Activated T-helper 2 cell treated with anti-CD3 and anti-CD28 coated beads, Interferon-gamma antibody, Interleukin-2, Interleukin-4, amounts not matched to agents 10 μg/mL and 5 μg/mL and 100 μg/mL, durations not matched to agents 14 hours and 24 hours and 36 hours (primary cell): ENCODE measurements at regions of chr17 and their contacts with region 1.

Region 1: GRCh38 chr17:31313982-31314784 is at the start of gene EVI2B:
- DNase-seq: no peak
- H3K4me3 Mint-ChIP-seq: peak within 1 kb of the TSS; percentile 88
- H3K27ac Mint-ChIP-seq: peak within 1 kb of the TSS; percentile 96
- H3K4me1 Mint-ChIP-seq: peaks cover 51% of the 10 kb centered on the region
- H3K27me3 Mint-ChIP-seq: no peaks in the 10 kb centered on the region
- total RNA-seq, gene EVI2B: 13.0 and 13.9 TPM in 2 replicates

Region 2: DNA sequence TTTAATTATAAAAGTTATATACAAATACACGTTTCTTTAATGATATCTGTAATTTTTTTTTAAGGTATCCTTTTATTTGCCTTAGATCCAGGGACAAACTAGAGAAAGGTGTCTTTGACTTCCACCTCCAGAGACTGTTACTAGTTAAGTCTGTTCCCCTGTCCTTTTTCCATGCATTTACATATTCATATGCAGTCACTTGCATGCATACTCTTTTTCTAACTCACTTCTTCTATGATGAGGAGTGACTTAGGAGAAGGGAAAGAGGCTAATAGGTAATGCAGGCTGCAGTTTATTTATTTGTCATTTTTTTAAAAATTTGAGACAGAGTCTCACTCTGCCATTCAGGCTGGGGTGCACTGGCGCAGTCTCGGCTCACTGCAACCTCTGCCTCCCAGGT is 78.0 kb before region 1 on chr17:
- intact Hi-C with region 1: no loop called
- DNase-seq: no peak
- H3K4me3 Mint-ChIP-seq: no peak overlapping the region
- H3K27ac Mint-ChIP-seq: no peak overlapping the region
- H3K4me1 Mint-ChIP-seq: no peaks in the 10 kb centered on the region
- H3K27me3 Mint-ChIP-seq: no peaks in the 10 kb centered on the region

Region 3: DNA sequence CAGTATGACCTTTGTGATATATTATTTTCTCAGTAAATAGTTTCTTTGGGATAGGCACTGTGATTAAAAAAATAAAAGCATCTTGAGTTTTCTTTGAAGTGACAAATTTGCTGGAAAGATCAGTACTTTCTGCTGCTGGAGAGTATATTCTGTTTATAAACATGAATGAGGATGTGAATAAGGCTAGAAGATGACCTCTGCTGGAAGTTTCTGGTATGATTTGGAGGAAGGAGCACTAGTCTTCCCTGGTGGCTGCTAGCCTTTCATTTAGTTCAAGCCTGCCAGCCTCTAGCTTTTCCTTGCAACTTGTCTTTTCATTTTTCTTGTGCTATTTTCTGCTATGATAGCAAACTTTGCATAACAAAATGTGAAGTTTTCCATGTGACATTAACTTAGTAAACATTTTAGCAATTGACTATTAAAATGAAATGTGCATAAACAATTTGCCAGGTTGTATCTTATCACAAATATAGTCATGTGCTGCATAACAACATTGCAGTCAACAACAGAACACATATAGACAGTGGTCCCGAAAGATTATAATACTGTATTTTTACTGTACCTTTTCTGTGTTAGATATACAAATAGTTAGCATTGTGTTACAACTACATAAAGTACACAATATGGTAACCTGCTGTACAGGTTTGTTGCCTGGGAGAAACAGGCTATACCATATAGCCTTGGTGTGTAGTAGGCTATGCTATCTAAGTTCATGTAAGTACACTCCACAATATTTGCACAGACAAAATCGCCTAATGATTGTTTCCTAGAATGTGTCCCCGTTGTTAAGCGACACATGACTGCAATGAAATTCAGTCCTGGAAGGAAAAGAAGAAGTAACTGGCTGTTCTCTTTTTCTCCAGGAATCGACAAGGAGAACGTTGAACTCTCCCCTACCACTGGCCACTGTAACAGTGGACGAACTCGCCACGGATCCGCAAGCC is 59.2 kb after region 1 on chr17:
- intact Hi-C with region 1: loop called (anchors 5 kb)
- DNase-seq: no peak
- H3K4me3 Mint-ChIP-seq: no peak overlapping the region
- H3K27ac Mint-ChIP-seq: no peak overlapping the region
- H3K4me1 Mint-ChIP-seq: peaks cover 15% of the 10 kb centered on the region
- H3K27me3 Mint-ChIP-seq: no peaks in the 10 kb centered on the region

Region 4: DNA sequence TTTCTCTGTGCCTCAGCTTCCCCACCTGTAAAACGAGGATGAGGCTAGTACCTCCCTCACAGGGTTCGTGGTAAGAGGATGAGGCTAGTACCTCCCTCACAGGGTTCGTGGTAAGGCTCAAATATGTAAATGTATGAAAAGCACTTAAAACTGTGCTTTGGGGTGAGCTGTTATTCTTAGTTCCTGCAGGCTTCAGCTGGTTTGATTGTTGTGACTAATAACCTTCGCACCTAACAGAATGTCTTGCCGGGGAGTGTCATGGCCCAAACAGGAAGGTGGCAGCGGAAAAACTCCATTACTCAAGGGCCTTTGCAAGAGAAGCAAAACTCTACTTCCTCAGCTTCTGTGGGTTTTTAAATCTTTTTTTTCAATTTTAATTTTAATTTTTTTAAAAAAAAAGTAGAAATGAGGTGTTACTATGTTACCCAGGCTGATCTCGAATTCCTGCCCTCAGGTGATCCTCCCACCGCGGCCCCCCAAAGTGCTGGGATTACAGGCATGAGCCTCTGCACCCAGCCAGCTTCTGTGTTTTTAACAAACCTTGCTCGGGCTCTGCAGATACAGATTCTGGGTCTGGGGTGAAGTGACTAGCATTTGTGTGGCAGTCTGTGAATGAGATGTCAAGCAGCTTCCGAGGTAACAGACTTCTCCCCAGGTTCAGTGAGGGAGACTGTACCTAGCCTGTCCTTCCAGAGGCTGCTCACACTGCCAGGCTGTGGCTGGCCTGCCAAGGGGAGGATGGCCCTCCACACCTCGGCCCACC is 180.3 kb after region 1 on chr17:
- intact Hi-C with region 1: loop called (anchors 5 kb)
- DNase-seq: peak; percentile 65
- H3K4me3 Mint-ChIP-seq: peak overlapping the region; percentile 65
- H3K27ac Mint-ChIP-seq: peak overlapping the region; percentile 93
- H3K4me1 Mint-ChIP-seq: peaks cover 78% of the 10 kb centered on the region
- H3K27me3 Mint-ChIP-seq: no peaks in the 10 kb centered on the region

Region 5: GRCh38 chr17:31508288-31509094 is 194.3 kb after region 1 on chr17:
- intact Hi-C with region 1: loop called (anchors 5 kb)
- DNase-seq: peak; percentile 83
- H3K4me3 Mint-ChIP-seq: peak overlapping the region; percentile 82
- H3K27ac Mint-ChIP-seq: peak overlapping the region; percentile 100
- H3K4me1 Mint-ChIP-seq: peaks cover 52% of the 10 kb centered on the region
- H3K27me3 Mint-ChIP-seq: no peaks in the 10 kb centered on the region